GM12878 (cell line): ENCODE measurements at regions of chr9 and their contacts with region 1.

Region 1: GRCh38 chr9:69759421-69760277 is at the start of gene PTAR1:
- DNase-seq: peak; percentile 35
- ATAC-seq: peak; percentile 86
- H3K4me3 ChIP-seq: peak within 1 kb of the TSS; percentile 92
- H3K27ac ChIP-seq: peak within 1 kb of the TSS; percentile 83
- H3K4me1 ChIP-seq: peaks cover 2% of the 10 kb centered on the region; the same call in 1 of the 2 replicates
- H3K27me3 ChIP-seq: no peaks in the 10 kb centered on the region
- CTCF ChIP-seq: no peak
- EP300 ChIP-seq: no peak
- POLR2A ChIP-seq: peak; percentile 98
- RAD21 ChIP-seq: no peak
- polyA plus RNA-seq, gene PTAR1: 4.9 to 6.6 TPM

Region 2: DNA sequence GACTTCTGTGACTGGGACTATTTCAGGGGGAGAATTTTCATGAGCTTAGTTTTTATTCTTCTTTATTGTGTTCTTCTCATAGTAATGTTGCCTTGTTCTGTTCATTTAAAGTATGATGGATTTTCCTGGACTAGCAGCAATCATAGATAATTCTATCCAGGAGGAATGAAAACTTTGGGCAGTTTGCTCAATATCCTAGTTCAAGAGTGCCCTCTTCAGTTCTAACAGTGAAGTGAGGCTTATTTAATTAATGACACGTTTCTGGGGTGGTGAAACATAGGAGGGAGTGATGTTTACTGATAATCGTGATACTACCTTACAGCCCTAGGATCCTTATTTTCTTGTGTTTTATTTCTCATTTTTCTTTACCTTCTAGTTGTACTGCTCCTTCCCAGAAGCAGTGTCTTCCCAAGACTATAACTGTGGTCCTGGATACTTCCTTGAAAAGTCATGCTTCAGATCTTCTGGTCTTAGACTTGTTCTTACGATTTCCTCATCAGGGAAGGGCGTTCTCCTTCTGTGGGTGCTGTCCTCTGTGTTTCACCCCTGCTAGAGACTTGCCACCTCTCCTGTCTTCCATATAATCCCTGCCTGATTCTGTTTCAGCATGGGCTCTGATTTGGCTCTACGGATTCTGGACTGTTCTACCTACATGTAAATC is 118.3 kb after region 1 on chr9:
- CTCF ChIA-PET with region 1: no interaction called
- POLR2A ChIA-PET with region 1: no interaction called
- RAD21 ChIA-PET with region 1: no interaction called
- SMC1A ChIA-PET with region 1: no interaction called
- in situ Hi-C with region 1: loop called (anchors 25 kb)
- intact Hi-C with region 1: no loop called
- DNase-seq: no peak
- ATAC-seq: peak; percentile 57
- H3K4me3 ChIP-seq: no peak overlapping the region
- H3K27ac ChIP-seq: no peak overlapping the region
- H3K4me1 ChIP-seq: no peaks in the 10 kb centered on the region
- H3K27me3 ChIP-seq: no peaks in the 10 kb centered on the region
- CTCF ChIP-seq: peak; percentile 46 to 53 (median 53); a peak in 5 of 6 replicates
- EP300 ChIP-seq: no peak
- POLR2A ChIP-seq: no peak
- RAD21 ChIP-seq: peak; percentile 76

Region 3: DNA sequence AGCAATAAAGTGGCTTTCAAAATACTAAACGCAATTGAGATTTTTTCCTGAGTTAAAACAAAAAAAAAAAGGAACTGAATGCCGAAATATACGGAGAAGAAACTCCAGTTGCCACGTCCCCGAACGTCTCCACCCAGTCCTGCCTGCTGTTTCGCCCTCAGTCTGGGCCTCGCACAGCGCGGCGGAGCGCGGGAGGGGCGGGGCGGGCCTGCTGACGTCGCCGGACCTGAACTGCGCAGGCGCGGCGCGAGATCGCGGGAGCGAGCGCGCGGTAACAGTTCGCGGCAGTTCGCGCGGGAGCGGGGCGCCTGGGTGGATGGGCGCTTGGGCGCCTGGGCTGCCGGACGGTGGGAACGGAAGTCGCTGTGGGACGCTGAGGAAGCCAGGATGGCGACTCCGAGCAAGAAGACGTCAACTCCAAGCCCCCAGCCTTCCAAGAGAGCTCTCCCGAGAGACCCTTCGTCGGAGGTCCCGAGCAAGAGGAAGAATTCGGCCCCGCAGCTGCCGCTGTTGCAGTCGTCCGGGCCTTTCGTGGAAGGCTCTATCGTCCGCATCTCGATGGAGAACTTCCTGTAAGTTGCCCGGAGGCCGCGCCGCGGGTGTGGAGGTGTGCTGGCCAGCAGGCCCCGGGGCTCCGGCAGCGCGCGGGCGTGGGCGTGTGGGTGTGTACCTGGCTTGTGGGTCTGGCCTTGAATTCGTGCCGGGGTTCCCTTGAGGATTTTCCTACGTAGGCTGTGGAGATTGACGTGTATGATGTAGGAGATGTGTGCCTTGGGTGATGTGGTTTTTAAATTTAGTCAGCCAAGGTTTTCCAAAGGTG is 499.3 kb after region 1 on chr9 and contains the start of gene SMC5:
- CTCF ChIA-PET with region 1: no interaction called
- POLR2A ChIA-PET with region 1: no interaction called
- RAD21 ChIA-PET with region 1: no interaction called
- SMC1A ChIA-PET with region 1: no interaction called
- in situ Hi-C with region 1: loop called (anchors 25 kb)
- intact Hi-C with region 1: loop called (anchors 5 kb)
- DNase-seq: peak; percentile 80
- ATAC-seq: peak; percentile 84
- H3K4me3 ChIP-seq: peak within 1 kb of the TSS; percentile 85
- H3K27ac ChIP-seq: peak within 1 kb of the TSS; percentile 93
- H3K4me1 ChIP-seq: peaks cover 14% of the 10 kb centered on the region
- H3K27me3 ChIP-seq: no peaks in the 10 kb centered on the region
- CTCF ChIP-seq: no peak
- EP300 ChIP-seq: peak; percentile 43 to 76; a peak in 2 of 4 replicates
- POLR2A ChIP-seq: peak; percentile 99
- RAD21 ChIP-seq: no peak
- polyA plus RNA-seq, gene SMC5: 6.5 to 7.2 TPM